Gastrocnemius medialis (tissue), 4 donors: ENCODE measurements at regions of chr16 and their contacts with region 1.

Region 1: DNA sequence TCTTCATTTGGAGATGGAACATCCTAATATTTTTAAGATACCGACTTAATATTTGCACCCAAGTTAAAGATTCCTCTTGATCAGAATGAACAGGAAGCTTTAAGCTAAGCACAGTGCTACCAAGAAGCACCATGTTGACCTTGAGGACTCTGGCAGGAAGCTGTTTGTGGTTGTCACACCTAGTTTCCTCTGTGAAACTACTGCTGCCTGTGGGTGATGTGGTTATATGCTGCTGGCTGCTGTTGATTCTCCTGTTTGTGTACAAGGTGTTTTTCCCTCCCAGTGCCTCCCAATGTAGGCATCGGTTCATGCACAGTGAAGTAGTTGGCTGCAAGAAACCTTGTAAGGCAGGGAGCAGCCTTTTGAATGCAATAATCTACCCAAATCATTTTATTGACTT is 23.4 kb downstream of the RBL2 start:
- DNase-seq: no peak
- ATAC-seq: peak in 1 of 2 donors; percentile 36
- H3K4me3 ChIP-seq: no peak overlapping the region
- H3K27ac ChIP-seq: no peak overlapping the region
- H3K4me1 ChIP-seq: no peaks in the 10 kb centered on the region
- H3K27me3 ChIP-seq: no peaks in the 10 kb centered on the region
- CTCF ChIP-seq: no peak
- POLR2A ChIP-seq: no peak

Region 2: DNA sequence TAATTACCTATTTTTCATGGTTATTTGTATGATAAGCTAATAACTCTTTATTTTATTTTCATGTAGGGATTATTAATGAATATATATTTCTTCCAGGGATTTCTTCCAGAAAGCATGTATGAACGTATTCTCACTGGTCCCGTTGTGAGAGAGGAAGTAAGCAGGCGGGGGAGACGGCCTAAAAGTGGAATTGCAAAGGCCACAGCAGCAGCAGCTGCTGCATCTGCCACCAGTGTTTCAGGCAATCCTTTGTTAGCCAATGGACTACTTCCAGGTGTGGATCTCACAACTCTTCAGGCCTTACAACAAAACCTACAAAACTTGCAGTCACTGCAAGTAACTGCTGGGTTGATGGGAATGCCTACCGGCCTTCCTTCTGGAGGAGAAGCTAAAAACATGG is 133.7 kb before region 1 on chr16:
- in situ Hi-C with region 1: loop called in 1 of 4 experiments (anchors 25 kb)
- intact Hi-C with region 1: loop called (anchors 10 kb)
- DNase-seq: no peak
- ATAC-seq: no peak
- H3K4me3 ChIP-seq: no peak overlapping the region
- H3K27ac ChIP-seq: no peak overlapping the region
- H3K4me1 ChIP-seq: no peaks in the 10 kb centered on the region
- H3K27me3 ChIP-seq: no peaks in the 10 kb centered on the region
- CTCF ChIP-seq: no peak
- POLR2A ChIP-seq: no peak

Region 3: GRCh38 chr16:53489755-53490154 is 32.1 kb after region 1 on chr16:
- in situ Hi-C with region 1: no loop called
- intact Hi-C with region 1: loop called (anchors 1 kb)
- DNase-seq: no peak
- ATAC-seq: peak; percentile 65 to 72
- H3K4me3 ChIP-seq: no peak overlapping the region
- H3K27ac ChIP-seq: peak overlapping the region; percentile 41 to 74 (median 49)
- H3K4me1 ChIP-seq: peaks cover 21 to 27% of the 10 kb centered on the region in 2 donors
- H3K27me3 ChIP-seq: no peaks in the 10 kb centered on the region
- CTCF ChIP-seq: no peak
- POLR2A ChIP-seq: no peak